Activated CD8-positive, alpha-beta T cell treated with anti-CD3 and anti-CD28 coated beads for 36 hours (primary cell): ENCODE measurements at regions of chr6 and their contacts with region 1.

Region 1: GRCh38 chr6:30130887-30131862 is 4.8 kb upstream of the TRIM40 start:
- DNase-seq: peak; percentile 76
- ATAC-seq: peak; percentile 94
- H3K4me3 Mint-ChIP-seq: no peak overlapping the region
- H3K27ac Mint-ChIP-seq: no peak overlapping the region
- H3K4me1 Mint-ChIP-seq: peaks cover 12% of the 10 kb centered on the region
- H3K27me3 Mint-ChIP-seq: peaks cover 66% of the 10 kb centered on the region
- CTCF ChIP-seq: peak; percentile 99

Region 2: GRCh38 chr6:30091577-30092381 is 39.4 kb before region 1 on chr6:
- CTCF ChIA-PET with region 1: interaction called, 28 read pairs
- POLR2A ChIA-PET with region 1: no interaction called
- intact Hi-C with region 1: no loop called
- DNase-seq: no peak
- ATAC-seq: no peak
- H3K4me3 Mint-ChIP-seq: no peak overlapping the region
- H3K27ac Mint-ChIP-seq: no peak overlapping the region
- H3K4me1 Mint-ChIP-seq: no peaks in the 10 kb centered on the region
- H3K27me3 Mint-ChIP-seq: peaks cover 50% of the 10 kb centered on the region
- CTCF ChIP-seq: no peak

Region 3: GRCh38 chr6:30102970-30103874 is 28.0 kb before region 1 on chr6:
- CTCF ChIA-PET with region 1: interaction called, 324 read pairs
- POLR2A ChIA-PET with region 1: interaction called, 16 read pairs
- intact Hi-C with region 1: loop called (anchors 1 kb)
- DNase-seq: peak; percentile 92
- ATAC-seq: peak; percentile 90
- H3K4me3 Mint-ChIP-seq: peak overlapping the region; percentile 75
- H3K27ac Mint-ChIP-seq: no peak overlapping the region
- H3K4me1 Mint-ChIP-seq: peaks cover 36% of the 10 kb centered on the region
- H3K27me3 Mint-ChIP-seq: peaks cover 53% of the 10 kb centered on the region
- CTCF ChIP-seq: peak; percentile 86

Region 4: DNA sequence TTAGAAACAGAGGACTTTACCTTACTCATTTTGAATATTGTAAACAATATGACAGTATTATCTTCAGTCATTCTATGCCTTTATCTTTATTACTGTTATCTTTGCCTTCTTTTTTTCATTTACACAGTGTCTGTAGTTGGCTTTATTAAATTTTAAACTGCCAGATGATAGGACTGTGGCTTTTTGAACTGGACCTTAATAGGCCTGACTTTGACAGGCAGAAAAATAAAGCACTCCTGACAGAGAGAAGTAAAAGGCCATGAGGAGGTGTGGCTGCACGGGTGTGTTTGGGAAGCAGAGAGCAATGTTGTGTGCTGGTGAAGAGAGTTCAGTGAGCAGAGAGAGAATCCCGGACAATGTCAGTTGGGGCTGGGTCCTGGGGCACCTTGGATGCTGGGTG is 12.6 kb after region 1 on chr6:
- CTCF ChIA-PET with region 1: interaction called, 30 read pairs
- POLR2A ChIA-PET with region 1: no interaction called
- intact Hi-C with region 1: no loop called
- DNase-seq: no peak
- ATAC-seq: no peak
- H3K4me3 Mint-ChIP-seq: no peak overlapping the region
- H3K27ac Mint-ChIP-seq: no peak overlapping the region
- H3K4me1 Mint-ChIP-seq: no peaks in the 10 kb centered on the region
- H3K27me3 Mint-ChIP-seq: peaks cover 53% of the 10 kb centered on the region
- CTCF ChIP-seq: no peak